ENCODE measurements at regions of chr11 and their contacts with region 1.

Region 1: DNA sequence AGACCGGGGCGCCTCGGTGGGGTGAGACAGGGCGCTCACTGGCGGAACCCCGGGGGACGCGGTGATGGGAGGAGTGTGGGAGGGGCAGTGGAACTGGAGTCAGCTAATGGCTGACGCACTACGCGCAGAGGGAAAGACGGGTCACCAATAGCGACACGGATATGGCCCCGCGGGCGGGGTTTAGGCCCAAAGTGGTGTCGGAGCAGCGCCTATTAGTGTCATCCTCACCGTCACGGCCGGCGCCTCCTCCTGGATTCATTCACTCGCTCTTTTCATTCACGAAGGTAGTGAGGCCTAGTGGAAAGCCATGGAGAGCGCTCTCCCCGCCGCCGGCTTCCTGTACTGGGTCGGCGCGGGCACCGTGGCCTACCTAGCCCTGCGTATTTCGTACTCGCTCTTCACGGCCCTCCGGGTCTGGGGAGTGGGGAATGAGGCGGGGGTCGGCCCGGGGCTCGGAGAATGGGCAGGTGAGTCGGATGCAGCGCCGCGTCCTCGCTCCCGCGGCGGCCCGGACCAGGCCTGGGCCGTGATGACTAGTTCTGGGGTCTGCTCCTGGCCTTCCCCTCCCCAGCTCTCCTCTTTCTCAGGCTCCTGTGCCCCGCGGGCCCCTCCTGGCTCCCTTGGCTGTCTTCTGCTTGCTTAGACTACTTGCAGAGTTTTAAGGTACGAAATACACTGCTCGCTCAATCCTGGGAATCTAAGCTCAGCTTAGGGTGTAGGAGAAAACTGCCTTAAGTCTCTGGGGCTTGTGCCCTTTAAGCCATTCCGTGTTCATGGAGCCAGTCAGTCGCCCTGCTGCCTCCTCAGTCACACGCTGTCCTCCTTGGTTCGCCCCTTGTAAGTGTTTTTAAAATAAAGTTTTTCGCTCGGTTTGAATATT is at the start of gene HSD17B12:
- DNase-seq: peak; percentile 100
- H3K4me3 Mint-ChIP-seq: peak within 1 kb of the TSS; percentile 98
- H3K27ac Mint-ChIP-seq: peak within 1 kb of the TSS; percentile 96
- H3K4me1 Mint-ChIP-seq: peaks cover 29% of the 10 kb centered on the region
- H3K27me3 Mint-ChIP-seq: peaks cover 12% of the 10 kb centered on the region
- total RNA-seq, gene HSD17B12: 70.8 and 80.1 TPM in 2 replicates

Region 2: DNA sequence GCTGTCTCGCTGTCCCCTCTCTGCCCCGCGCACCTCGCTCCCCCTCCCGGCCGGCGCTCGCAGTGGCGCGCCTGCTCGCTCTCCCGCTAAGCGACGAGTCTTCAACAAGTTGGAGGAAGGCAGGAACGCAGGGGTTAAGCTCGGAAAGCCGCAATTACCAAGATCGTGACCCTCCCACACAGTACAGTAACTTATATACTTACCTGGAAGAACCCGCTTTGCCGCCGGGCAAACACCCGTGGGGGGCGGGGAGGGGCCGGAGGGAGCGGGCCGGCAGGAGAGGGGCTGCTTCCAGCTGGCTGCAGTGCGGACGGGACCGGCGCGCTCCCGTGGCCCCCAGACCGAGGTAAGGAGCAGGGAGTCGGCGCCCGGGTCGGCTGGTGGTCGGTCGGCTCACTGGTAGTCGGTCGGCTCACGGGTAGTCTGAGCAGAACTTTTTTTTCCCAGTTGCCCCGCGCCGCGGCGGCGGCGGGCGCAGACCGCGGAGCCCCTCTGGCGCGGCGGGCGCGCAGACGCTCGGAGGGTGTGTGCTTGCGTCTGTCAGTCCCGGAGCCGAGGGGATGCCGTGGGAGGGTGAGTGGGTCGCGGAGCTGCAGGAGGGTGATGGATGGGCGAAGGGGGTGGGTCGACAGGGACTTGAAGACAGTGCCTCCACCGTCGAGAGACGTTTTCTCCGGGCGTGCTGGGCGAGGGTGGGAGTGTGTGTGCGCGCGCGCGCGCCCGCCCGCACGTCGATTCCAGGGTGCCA is 101.4 kb before region 1 on chr11:
- intact Hi-C with region 1: loop called (anchors 2 kb)
- DNase-seq: peak; percentile 63
- H3K4me3 Mint-ChIP-seq: peak overlapping the region; percentile 73
- H3K27ac Mint-ChIP-seq: no peak overlapping the region
- H3K4me1 Mint-ChIP-seq: peaks cover 21% of the 10 kb centered on the region
- H3K27me3 Mint-ChIP-seq: peaks cover 88% of the 10 kb centered on the region

Region 3: GRCh38 chr11:43830928-43831440 is 150.2 kb after region 1 on chr11:
- intact Hi-C with region 1: loop called (anchors 1 kb)
- DNase-seq: peak; percentile 70
- H3K4me3 Mint-ChIP-seq: peak overlapping the region; percentile 12
- H3K27ac Mint-ChIP-seq: peak overlapping the region; percentile 76
- H3K4me1 Mint-ChIP-seq: peaks cover 11% of the 10 kb centered on the region
- H3K27me3 Mint-ChIP-seq: no peaks in the 10 kb centered on the region

Region 4: DNA sequence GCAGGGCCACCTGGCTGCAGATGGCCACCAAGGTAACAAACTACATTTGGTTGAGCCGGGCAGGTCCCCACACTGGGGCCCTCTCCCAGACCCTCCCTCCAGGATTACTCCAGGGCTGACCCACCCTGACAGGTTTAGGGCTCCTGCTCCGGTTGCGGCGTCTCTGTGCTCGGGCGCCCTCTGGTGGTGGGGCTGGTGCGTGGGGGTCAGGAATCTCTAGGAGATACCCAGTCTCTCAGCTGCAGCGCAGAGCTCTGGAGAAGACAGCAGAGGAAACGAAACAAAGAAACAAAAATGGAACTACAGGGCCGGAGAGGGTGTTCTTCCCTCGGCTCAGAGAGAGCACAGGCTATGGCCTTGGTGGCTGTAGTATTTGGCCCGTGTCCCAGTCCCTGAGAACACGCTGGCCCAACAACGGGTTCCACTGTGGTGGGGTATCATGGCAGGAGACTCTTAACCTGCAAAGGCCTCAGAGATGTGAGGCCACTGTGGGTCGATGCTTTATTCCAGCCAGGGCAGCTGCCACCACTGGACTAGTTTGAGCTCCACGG is 264.1 kb after region 1 on chr11:
- intact Hi-C with region 1: loop called (anchors 10 kb)
- DNase-seq: peak; percentile 93
- H3K4me3 Mint-ChIP-seq: peak overlapping the region; percentile 87
- H3K27ac Mint-ChIP-seq: peak overlapping the region; percentile 28
- H3K4me1 Mint-ChIP-seq: peaks cover 18% of the 10 kb centered on the region
- H3K27me3 Mint-ChIP-seq: peaks cover 62% of the 10 kb centered on the region

Region 5: DNA sequence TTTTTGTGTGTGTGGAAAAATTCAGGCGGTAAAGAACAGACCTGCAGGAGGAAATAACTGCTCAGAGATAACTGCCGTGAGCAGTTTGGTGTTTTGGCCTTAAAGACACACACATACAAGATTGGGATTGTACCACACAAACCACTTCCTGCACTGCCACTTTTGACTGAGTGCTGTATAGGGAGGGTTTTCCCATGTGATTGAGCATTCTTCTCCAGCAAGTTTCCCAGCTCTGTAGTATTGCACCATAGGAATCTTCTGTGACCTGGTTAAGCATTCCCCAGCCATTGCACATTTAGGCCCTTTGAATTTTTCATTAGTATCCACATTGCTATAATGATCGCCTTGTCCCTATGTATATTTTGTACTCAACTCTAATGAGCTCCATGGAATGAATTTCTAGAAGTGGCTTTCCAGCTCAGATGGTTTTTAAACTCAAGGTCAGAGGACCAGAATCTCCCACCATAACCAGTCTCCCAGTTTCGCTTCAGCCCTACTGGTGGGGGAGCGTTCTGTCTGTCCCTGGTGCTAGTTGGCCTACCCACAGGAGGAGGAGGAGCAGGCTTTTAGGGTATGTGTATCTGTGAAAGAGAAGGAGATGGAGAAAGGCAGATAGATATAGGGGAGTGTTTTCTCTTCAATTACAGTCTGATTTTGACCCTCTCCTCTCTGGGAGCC is 894.0 kb after region 1 on chr11:
- intact Hi-C with region 1: loop called (anchors 10 kb)
- DNase-seq: peak; percentile 88
- H3K4me3 Mint-ChIP-seq: peak overlapping the region; percentile 80
- H3K27ac Mint-ChIP-seq: peak overlapping the region; percentile 95
- H3K4me1 Mint-ChIP-seq: peaks cover 89% of the 10 kb centered on the region
- H3K27me3 Mint-ChIP-seq: no peaks in the 10 kb centered on the region